ENCODE measurements at regions of chr1 and their contacts with region 1.

Region 1: DNA sequence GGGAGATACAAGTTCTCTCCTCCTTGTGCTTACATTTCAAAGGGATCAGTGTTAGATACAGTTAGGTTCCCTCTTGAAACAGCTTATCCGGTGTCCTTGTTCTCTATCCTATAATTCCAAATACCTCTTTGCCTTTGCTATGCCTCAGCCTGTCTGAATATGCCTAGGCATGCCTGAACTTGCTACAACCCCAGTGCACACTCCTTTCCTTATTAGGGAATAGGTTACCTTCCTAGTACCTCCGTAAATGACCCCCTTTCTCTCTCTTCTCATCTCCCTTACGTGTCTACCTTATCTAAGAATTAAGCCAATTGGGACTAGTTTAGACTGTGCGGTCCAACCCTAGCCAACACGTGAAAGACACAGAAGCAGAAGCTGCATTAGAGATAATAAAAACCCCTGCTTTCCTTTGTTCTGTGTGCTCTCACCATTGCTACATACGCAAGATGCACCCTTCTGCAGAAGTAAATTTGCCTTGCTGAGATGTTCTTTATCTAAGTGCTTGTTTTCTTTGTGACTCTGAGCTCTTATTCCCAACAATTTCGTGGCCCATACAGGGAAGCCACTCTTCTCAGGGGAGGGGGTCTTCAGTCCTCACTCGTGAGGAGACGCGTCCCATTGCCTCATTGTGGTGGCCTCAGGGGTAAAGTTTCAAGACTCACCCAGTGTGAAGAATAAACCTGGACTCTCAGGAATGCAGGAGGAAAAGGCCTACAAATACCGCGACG is 802.1 kb downstream of the PLA2G4A start:
- DNase-seq: no peak
- H3K4me3 ChIP-seq: no peak overlapping the region
- H3K27ac ChIP-seq: no peak overlapping the region
- H3K4me1 ChIP-seq: no peaks in the 10 kb centered on the region
- H3K27me3 ChIP-seq: no peaks in the 10 kb centered on the region
- CTCF ChIP-seq: no peak

Region 2: DNA sequence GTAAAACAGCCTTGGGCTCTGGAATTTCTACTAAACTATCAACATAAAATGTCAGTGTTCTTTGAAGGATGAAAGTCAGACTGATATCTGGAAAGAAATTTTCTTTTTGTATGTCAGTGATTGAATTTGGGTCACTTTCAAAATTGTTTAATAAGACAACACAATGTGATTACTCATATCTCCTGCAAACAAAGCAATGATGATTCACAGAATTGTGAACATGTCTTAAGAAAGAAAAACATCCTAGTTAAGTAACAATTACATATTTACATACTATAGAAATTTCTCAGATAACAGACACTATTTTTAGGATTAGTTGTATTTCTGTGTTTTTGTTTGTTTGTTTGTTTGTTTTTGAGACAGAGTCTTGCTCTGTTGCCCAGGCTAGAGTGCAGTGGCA is 24.4 kb after region 1 on chr1:
- intact Hi-C with region 1: loop called (anchors 2 kb)
- DNase-seq: no peak
- H3K4me3 ChIP-seq: no peak overlapping the region
- H3K27ac ChIP-seq: no peak overlapping the region
- H3K4me1 ChIP-seq: no peaks in the 10 kb centered on the region
- H3K27me3 ChIP-seq: no peaks in the 10 kb centered on the region
- CTCF ChIP-seq: no peak

Region 3: DNA sequence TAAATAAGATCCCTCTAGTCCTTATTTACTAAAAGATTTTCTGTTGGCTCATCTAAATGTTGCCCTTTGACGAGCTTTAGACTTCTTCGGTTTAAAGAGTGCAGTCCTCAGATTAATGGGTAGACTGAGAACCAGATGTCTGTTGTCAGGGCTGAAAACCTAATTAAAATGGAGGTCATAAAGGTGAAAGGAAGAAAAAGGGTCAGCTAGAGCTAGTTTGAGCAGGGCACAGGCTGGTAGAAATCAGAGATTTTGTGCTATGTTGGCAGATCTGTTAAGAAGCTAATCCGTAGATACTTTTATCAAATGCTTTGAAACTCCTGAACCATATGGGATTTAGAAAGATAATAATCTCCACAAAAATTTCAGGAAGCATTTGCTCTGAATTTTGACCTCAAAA is 156.9 kb after region 1 on chr1:
- intact Hi-C with region 1: no loop called
- DNase-seq: no peak
- H3K4me3 ChIP-seq: no peak overlapping the region
- H3K27ac ChIP-seq: no peak overlapping the region
- H3K4me1 ChIP-seq: no peaks in the 10 kb centered on the region
- H3K27me3 ChIP-seq: no peaks in the 10 kb centered on the region
- CTCF ChIP-seq: no peak